ENCODE measurements at regions of chr5 and their contacts with region 1.

Region 1: GRCh38 chr5:134637161-134637582 is 4.5 kb upstream of the SAR1B start:
- DNase-seq: no peak
- H3K4me3 ChIP-seq: no peak overlapping the region
- H3K27ac ChIP-seq: no peak overlapping the region
- H3K4me1 ChIP-seq: peaks cover 0 to 7% (median 3%) of the 10 kb centered on the region in 4 donors
- H3K27me3 ChIP-seq: no peaks in the 10 kb centered on the region
- CTCF ChIP-seq: no peak
- EP300 ChIP-seq: no peak
- POLR2A ChIP-seq: no peak

Region 2: GRCh38 chr5:134592141-134592746 is 44.9 kb before region 1 on chr5:
- intact Hi-C with region 1: no loop called
- DNase-seq: no peak
- H3K4me3 ChIP-seq: no peak overlapping the region
- H3K27ac ChIP-seq: no peak overlapping the region
- H3K4me1 ChIP-seq: no peaks in the 10 kb centered on the region
- H3K27me3 ChIP-seq: no peaks in the 10 kb centered on the region
- CTCF ChIP-seq: no peak
- EP300 ChIP-seq: no peak
- POLR2A ChIP-seq: no peak

Region 3: GRCh38 chr5:134648425-134649162 is 11.4 kb after region 1 on chr5 and contains the start of gene SEC24A:
- intact Hi-C with region 1: loop called (anchors 1 kb)
- DNase-seq: peak; percentile 93
- H3K4me3 ChIP-seq: peak within 1 kb of the TSS; percentile 89 to 98 (median 90)
- H3K27ac ChIP-seq: peak within 1 kb of the TSS; percentile 92 to 98 (median 94)
- H3K4me1 ChIP-seq: peaks cover 0 to 43% (median 36%) of the 10 kb centered on the region in 4 donors
- H3K27me3 ChIP-seq: no peaks in the 10 kb centered on the region
- CTCF ChIP-seq: no peak
- EP300 ChIP-seq: no peak
- POLR2A ChIP-seq: peak; percentile 43 to 72
- total RNA-seq, gene SEC24A: 14.8 to 21.0 (median 17.0) TPM

Region 4: GRCh38 chr5:134692722-134693121 is 55.5 kb after region 1 on chr5:
- intact Hi-C with region 1: no loop called
- DNase-seq: no peak
- H3K4me3 ChIP-seq: no peak overlapping the region
- H3K27ac ChIP-seq: no peak overlapping the region
- H3K4me1 ChIP-seq: no peaks in the 10 kb centered on the region
- H3K27me3 ChIP-seq: no peaks in the 10 kb centered on the region
- CTCF ChIP-seq: no peak
- EP300 ChIP-seq: no peak
- POLR2A ChIP-seq: no peak

Region 5: DNA sequence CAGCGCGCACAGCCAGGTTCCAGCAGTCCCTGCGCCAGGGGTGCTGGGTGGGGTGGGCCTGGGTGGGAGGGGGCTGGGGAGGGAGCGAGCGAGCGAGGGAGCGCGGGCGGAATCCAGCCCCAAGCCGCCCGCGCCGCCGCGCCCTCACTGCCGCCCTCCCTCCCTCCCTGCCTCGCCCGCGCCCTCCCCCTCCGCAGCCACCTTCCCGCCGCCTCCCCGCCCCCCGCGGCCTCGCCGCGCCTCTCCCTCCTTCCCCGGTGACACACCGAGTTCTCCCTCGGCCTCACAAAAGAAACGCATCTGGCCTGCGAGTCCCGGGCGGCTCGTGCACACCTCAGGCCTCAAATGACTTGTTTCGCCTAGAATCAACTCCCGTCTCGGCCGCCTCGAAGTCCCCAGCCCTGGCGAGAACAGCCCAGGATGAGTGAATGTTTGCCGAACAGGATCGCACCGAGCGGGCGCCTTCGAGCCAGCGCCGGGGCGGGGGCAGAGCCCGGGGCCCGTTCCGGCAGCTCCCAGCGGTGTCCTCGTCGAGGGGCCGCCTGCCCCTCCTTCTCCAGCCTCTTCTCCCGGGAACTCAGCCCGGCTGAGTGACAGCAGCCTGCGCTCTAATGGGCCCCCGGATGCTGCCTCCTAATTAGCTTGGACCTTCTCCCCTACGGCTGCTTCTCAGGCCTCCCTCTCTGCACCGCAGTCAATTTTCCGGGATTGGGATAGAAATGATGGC is 397.2 kb after region 1 on chr5:
- intact Hi-C with region 1: no loop called
- DNase-seq: no peak
- H3K4me3 ChIP-seq: peak overlapping the region; percentile 11 to 56 (median 45)
- H3K27ac ChIP-seq: peak overlapping the region; percentile 6 to 71 (median 44)
- H3K4me1 ChIP-seq: peaks cover 0 to 54% (median 51%) of the 10 kb centered on the region in 4 donors
- H3K27me3 ChIP-seq: peaks cover 85 to 100% (median 98%) of the 10 kb centered on the region in 3 donors
- CTCF ChIP-seq: no peak
- EP300 ChIP-seq: no peak
- POLR2A ChIP-seq: no peak

Measured in sigmoid colon (tissue), 7 donors.